CD8-positive, alpha-beta memory T cell (primary cell): ENCODE measurements at regions of chr11 and their contacts with region 1.

Region 1: DNA sequence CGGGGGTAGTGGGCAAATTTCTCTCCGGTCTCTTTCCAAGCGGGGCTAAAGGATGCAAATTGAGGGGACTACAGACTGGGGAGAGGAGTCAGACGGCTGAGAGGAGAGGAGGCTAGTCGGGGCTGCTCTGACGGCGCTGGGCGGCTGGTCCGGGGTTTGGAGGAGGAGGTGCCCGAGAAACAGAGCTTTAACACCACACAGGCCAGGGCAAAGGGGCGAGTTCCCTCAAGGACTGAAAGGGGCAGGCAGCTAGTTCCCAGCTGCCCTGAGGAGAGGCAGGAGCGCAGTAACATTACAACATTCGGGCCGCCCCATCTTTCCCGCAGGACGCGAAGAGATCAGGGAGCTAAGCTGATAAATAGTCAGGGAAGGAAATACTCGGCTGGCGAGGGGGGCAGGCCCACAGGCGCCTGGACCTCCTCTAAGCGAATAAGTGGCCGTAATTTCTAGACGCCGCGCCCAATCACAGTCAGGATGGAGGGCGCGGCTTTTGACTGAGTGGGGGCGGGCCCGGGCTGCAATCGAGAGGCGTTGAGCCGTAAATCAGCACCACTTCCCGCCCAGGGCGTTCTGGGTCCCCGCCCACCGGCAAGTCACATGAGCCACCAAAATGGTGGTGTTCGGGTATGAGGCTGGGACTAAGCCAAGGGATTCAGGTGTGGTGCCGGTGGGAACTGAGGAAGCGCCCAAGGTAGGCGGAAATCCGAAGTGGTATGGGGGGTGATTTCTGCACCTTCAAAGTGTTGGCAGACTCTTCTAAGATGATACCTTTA is at the start of gene TMEM126B:
- DNase-seq: peak; percentile 92 to 96 (median 95)
- H3K4me3 ChIP-seq: peak within 1 kb of the TSS; percentile 89
- H3K4me3 Mint-ChIP-seq: peak within 1 kb of the TSS; percentile 94 to 99 (median 97)
- H3K27ac ChIP-seq: peak within 1 kb of the TSS; percentile 79
- H3K27ac Mint-ChIP-seq: peak within 1 kb of the TSS; percentile 90 to 97 (median 96)
- H3K4me1 ChIP-seq: peaks cover 29% of the 10 kb centered on the region
- H3K4me1 Mint-ChIP-seq: peaks cover 40 to 59% (median 49%) of the 10 kb centered on the region in 3 donors
- H3K27me3 ChIP-seq: no peaks in the 10 kb centered on the region
- H3K27me3 Mint-ChIP-seq: no peaks in the 10 kb centered on the region
- total RNA-seq, gene TMEM126B: 48.3 to 52.0 TPM

Region 2: DNA sequence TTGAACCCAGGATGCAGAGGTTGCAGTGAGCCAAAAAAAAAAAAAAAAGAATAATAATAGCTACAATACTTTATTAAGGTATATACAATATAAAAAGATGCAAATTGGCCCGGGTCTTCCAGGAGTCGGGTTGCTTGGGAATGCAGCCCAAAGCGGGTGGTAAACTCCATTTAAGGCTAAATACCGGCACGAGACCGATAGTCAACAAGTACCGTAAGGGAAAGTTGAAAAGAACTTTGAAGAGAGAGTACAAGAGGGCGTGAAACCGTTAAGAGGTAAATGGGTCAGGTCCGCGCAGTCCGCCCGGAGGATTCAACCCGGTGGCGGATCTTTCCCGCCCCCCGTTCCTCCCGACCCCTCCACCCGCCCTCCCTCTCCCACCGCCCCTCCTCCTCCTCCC is 144.3 kb before region 1 on chr11:
- CTCF ChIA-PET with region 1: no interaction called
- POLR2A ChIA-PET with region 1: no interaction called
- DNase-seq: no peak
- H3K4me3 ChIP-seq: no peak overlapping the region
- H3K4me3 Mint-ChIP-seq: no peak overlapping the region
- H3K27ac ChIP-seq: no peak overlapping the region
- H3K27ac Mint-ChIP-seq: no peak overlapping the region
- H3K4me1 ChIP-seq: no peaks in the 10 kb centered on the region
- H3K4me1 Mint-ChIP-seq: no peaks in the 10 kb centered on the region
- H3K27me3 ChIP-seq: no peaks in the 10 kb centered on the region
- H3K27me3 Mint-ChIP-seq: peaks cover 0 to 2% of the 10 kb centered on the region in 2 donors

Region 3: DNA sequence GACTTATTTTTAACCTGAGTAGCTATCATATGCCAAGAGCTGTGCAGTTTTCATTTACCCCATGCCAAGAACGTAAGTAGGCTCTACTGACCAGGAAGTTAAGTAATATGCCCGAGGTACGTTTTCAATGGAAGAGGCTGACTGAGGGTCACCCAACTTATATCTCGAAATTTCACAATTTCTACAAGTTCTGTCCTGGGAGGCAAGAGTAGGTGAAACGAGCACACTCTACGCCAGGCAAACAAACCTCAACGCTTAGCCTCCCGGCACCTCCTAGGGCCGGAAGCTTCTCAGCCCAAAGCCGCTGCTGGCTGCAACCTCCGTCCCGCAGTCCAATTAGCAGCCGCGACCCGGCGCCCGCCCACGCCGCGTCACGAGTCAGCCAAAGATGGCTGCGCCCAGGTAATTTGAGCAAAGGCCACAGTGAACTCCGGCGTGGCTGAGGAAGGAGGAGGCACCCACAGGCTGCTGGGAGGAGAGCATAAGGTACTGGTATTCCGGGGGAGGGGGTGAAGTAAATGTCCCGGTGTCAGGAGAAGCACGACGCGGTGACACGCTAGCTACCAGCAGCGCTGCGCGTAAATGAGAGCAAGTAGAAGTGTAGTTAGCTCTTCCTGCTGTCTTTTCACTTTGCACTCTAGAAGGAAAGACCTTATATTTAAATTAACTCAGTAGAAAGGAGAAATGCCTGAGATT is 19.6 kb after region 1 on chr11 and contains the start of gene TMEM126A:
- CTCF ChIA-PET with region 1: interaction called, 3 read pairs
- POLR2A ChIA-PET with region 1: interaction called, 27 read pairs
- DNase-seq: peak; percentile 83 to 92 (median 87)
- H3K4me3 ChIP-seq: peak within 1 kb of the TSS; percentile 81
- H3K4me3 Mint-ChIP-seq: peak within 1 kb of the TSS; percentile 86 to 97 (median 96)
- H3K27ac ChIP-seq: peak within 1 kb of the TSS; percentile 77
- H3K27ac Mint-ChIP-seq: peak within 1 kb of the TSS; percentile 87 to 99 (median 98)
- H3K4me1 ChIP-seq: peaks cover 21% of the 10 kb centered on the region
- H3K4me1 Mint-ChIP-seq: peaks cover 23 to 43% (median 41%) of the 10 kb centered on the region in 3 donors
- H3K27me3 ChIP-seq: no peaks in the 10 kb centered on the region
- H3K27me3 Mint-ChIP-seq: peaks cover 8 to 25% of the 10 kb centered on the region in 2 donors
- total RNA-seq, gene TMEM126A: 70.0 to 73.0 TPM

Region 4: DNA sequence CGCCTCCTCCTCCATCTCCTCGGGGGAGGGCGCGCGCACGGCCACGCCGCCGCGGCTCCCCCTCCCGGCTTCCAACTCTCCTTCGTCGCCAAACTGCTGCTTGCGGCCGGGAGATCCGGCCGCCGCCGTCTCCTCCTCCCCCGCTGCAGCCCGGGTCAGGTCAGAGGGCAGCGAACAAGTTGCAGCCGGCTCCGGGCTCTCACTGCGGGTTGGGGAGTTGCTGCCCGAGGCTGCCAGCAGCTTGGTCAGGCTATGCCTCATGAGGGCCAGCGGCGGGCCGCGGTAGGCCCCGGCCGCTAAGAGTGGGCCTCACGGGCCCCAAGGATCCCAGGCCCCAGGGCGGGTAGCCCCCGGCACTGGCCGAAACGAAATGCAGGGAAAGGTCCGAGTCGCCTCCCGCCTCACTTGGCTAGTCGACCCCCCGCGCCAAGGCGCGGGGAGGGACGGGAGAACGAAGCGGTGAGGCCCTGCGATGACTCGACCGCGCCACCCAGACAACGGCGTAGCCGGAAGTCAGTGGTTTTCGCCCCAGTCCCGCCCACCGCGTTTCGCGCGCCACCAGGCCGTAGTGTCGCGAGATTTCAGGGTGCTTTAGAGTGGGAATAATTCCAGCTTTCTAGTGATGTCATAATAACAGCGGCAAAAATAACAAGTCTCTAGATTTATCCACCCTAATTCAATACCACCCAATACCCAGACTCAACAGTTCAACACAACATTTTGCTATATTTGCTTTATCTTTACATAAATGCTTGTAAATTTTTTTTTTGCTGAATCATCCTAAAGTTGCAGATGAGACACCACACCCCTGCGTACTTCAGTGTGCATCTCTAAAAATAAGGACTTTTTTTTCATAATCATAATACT is 36.7 kb after region 1 on chr11 and contains the start of gene CREBZF:
- CTCF ChIA-PET with region 1: interaction called, 10 read pairs
- POLR2A ChIA-PET with region 1: interaction called, 14 read pairs
- DNase-seq: peak; percentile 86 to 95 (median 90)
- H3K4me3 ChIP-seq: peak within 1 kb of the TSS; percentile 92
- H3K4me3 Mint-ChIP-seq: peak within 1 kb of the TSS; percentile 97 to 100 (median 99)
- H3K27ac ChIP-seq: peak within 1 kb of the TSS; percentile 98
- H3K27ac Mint-ChIP-seq: peak within 1 kb of the TSS; percentile 97 to 100 (median 100)
- H3K4me1 ChIP-seq: peaks cover 37% of the 10 kb centered on the region
- H3K4me1 Mint-ChIP-seq: peaks cover 40 to 50% (median 49%) of the 10 kb centered on the region in 3 donors
- H3K27me3 ChIP-seq: no peaks in the 10 kb centered on the region
- H3K27me3 Mint-ChIP-seq: peaks cover 2 to 3% of the 10 kb centered on the region in 2 donors
- total RNA-seq, gene CREBZF: 45.0 to 45.1 TPM

Region 5: GRCh38 chr11:85902353-85902752 is 274.2 kb after region 1 on chr11:
- CTCF ChIA-PET with region 1: no interaction called
- POLR2A ChIA-PET with region 1: no interaction called
- DNase-seq: no peak
- H3K4me3 ChIP-seq: no peak overlapping the region
- H3K4me3 Mint-ChIP-seq: no peak overlapping the region
- H3K27ac ChIP-seq: no peak overlapping the region
- H3K27ac Mint-ChIP-seq: no peak overlapping the region
- H3K4me1 ChIP-seq: no peaks in the 10 kb centered on the region
- H3K4me1 Mint-ChIP-seq: no peaks in the 10 kb centered on the region
- H3K27me3 ChIP-seq: no peaks in the 10 kb centered on the region
- H3K27me3 Mint-ChIP-seq: peaks cover 0 to 3% of the 10 kb centered on the region in 2 donors

Region 6: DNA sequence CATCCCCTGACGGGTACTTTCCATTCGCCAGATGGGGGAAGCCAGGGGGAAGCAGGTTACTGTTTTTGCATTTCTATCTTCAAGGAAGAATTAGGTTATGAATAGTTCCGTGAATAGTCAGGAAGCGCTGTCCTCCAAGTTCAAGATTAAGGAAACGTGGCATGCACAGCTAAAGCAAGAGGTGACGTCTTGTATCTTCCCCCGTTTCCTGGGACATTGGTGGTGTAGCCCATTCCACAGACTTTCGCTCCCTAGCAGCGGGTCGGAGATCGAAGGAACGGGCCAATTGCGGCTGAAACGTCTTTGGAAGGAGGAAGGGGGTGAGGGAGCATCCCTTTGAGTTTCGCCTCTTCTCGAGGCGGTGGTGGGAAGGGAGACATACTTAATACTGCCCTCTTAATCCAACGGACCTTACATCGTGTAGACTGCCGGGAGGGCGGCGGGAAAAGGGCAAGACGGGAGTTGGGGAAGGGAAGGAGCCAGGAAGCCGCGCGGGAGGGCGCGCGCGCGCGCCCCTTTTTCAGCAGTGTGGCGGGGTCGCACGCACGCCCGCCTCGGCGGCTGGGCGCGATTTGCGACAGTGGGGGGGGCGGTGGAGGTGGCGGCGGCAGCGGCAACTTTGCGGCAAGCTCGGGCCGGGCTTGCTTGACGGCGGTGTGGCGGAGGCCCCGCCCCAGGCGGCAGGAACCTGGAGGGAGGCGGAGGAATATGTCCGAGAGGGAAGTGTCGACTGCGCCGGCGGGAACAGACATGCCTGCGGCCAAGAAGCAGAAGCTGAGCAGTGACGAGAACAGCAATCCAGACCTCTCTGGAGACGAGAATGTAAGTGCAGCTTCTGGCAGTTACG is 616.6 kb after region 1 on chr11 and contains the start of gene EED:
- CTCF ChIA-PET with region 1: no interaction called
- POLR2A ChIA-PET with region 1: interaction called, 10 read pairs
- DNase-seq: peak; percentile 91 to 96 (median 92)
- H3K4me3 ChIP-seq: peak within 1 kb of the TSS; percentile 100
- H3K4me3 Mint-ChIP-seq: no peak within 1 kb of the TSS
- H3K27ac ChIP-seq: peak within 1 kb of the TSS; percentile 96
- H3K27ac Mint-ChIP-seq: no peak within 1 kb of the TSS
- H3K4me1 ChIP-seq: peaks cover 42% of the 10 kb centered on the region
- H3K4me1 Mint-ChIP-seq: peaks cover 0 to 29% (median 4%) of the 10 kb centered on the region in 3 donors
- H3K27me3 ChIP-seq: no peaks in the 10 kb centered on the region
- H3K27me3 Mint-ChIP-seq: peaks cover 4 to 5% of the 10 kb centered on the region in 2 donors
- total RNA-seq, gene EED: 188 to 190 TPM